Endothelial cell of umbilical vein (primary cell): ENCODE measurements at regions of chrX and their contacts with region 1.

Region 1: DNA sequence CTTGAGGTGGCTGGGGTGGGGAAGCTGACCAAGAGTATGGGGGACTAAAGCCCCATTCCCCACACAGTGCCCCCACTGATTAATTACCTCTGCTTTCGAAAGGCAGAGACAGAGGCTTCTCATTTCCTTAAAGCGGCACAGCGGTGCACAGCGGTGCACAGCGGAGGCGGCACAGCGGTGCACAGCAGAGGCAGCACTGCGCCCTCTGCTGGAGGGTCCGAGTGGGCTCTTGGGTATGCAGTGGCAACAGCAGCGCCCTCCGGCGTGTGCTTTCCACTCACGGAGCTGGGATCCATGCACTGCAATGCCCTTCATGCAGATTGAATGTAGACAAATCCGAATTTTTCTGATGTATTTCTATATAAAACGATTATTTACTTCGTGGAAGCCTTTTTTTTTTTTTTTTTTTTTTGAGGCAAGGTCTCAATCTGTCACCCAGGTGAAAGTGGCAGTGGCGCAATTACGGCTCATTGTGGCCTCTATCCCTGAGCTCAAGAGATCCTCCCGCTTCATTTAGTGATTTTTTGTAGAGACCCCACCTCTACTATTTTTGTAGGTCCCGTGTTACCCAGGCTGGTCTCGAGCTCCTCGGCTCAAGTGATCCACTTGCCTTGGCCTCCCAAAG is 19.7 kb upstream of the PRPS2 start:
- DNase-seq: peak; percentile 33
- H3K4me3 ChIP-seq: no peak overlapping the region
- H3K27ac ChIP-seq: no peak overlapping the region
- H3K4me1 ChIP-seq: no peaks in the 10 kb centered on the region
- H3K27me3 ChIP-seq: peaks cover 1 to 3% of the 10 kb centered on the region in 2 experiments
- CTCF ChIP-seq: peak; percentile 77 to 91
- POLR2A ChIP-seq: no peak

Region 2: GRCh38 chrX:12080265-12080664 is 691.3 kb before region 1 on chrX:
- CTCF ChIA-PET with region 1: interaction called, 10 read pairs
- POLR2A ChIA-PET with region 1: no interaction called
- dilution Hi-C with region 1: no loop called
- intact Hi-C with region 1: loop called (anchors 1 kb)
- DNase-seq: peak; percentile 42
- H3K4me3 ChIP-seq: no peak overlapping the region
- H3K27ac ChIP-seq: no peak overlapping the region
- H3K4me1 ChIP-seq: no peaks in the 10 kb centered on the region
- H3K27me3 ChIP-seq: no peaks in the 10 kb centered on the region
- CTCF ChIP-seq: peak; percentile 31 to 45
- POLR2A ChIP-seq: no peak

Region 3: GRCh38 chrX:12758292-12758691 is 13.3 kb before region 1 on chrX:
- CTCF ChIA-PET with region 1: interaction called, 10 read pairs
- POLR2A ChIA-PET with region 1: no interaction called
- dilution Hi-C with region 1: no loop called
- intact Hi-C with region 1: no loop called
- DNase-seq: no peak
- H3K4me3 ChIP-seq: no peak overlapping the region
- H3K27ac ChIP-seq: no peak overlapping the region
- H3K4me1 ChIP-seq: no peaks in the 10 kb centered on the region
- H3K27me3 ChIP-seq: no peaks in the 10 kb centered on the region
- CTCF ChIP-seq: no peak
- POLR2A ChIP-seq: no peak

Region 4: GRCh38 chrX:12791257-12792228 is 20.0 kb after region 1 on chrX and contains the start of gene PRPS2:
- CTCF ChIA-PET with region 1: interaction called, 24 read pairs
- POLR2A ChIA-PET with region 1: no interaction called
- dilution Hi-C with region 1: no loop called
- intact Hi-C with region 1: no loop called
- DNase-seq: peak; percentile 50
- H3K4me3 ChIP-seq: peak within 1 kb of the TSS; percentile 55 to 79 (median 69)
- H3K27ac ChIP-seq: peak within 1 kb of the TSS; percentile 17
- H3K4me1 ChIP-seq: peaks cover 5% of the 10 kb centered on the region
- H3K27me3 ChIP-seq: peaks cover 0 to 5% of the 10 kb centered on the region in 2 experiments
- CTCF ChIP-seq: no peak
- POLR2A ChIP-seq: no peak
- total RNA-seq, gene PRPS2: 36.7 and 38.0 TPM in 2 replicates

Region 5: GRCh38 chrX:14729058-14729457 is 1957.5 kb after region 1 on chrX:
- CTCF ChIA-PET with region 1: no interaction called
- POLR2A ChIA-PET with region 1: no interaction called
- dilution Hi-C with region 1: no loop called
- intact Hi-C with region 1: loop called (anchors 10 kb)
- DNase-seq: no peak
- H3K4me3 ChIP-seq: no peak overlapping the region
- H3K27ac ChIP-seq: no peak overlapping the region
- H3K4me1 ChIP-seq: no peaks in the 10 kb centered on the region
- H3K27me3 ChIP-seq: no peaks in the 10 kb centered on the region
- CTCF ChIP-seq: no peak
- POLR2A ChIP-seq: no peak